KBM-7 (cell line): ENCODE measurements at regions of chr7 and their contacts with region 1.

Region 1: GRCh38 chr7:88111136-88111743 is 108.6 kb downstream of the SRI start:
- DNase-seq: peak; percentile 63

Region 2: DNA sequence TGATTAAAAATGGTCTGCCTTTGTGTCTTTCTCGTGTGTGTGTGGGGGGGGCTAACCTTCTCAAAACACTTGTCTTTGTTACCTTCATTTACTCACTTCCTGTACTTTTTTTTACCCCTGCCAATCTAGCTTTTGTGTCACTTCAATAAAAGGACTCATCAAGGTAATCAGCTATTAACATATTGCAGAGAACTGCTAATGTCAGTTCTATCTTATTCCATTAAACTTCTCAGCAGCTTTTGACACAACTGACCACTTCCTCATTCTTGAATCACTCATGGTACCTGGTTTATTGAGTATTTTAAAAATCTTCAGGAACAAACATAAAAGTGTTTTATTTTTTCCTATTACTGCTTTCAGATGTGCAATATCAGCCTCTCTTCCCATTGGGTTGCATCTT is 294.9 kb before region 1 on chr7:
- in situ Hi-C with region 1: loop called (anchors 25 kb)
- DNase-seq: peak; percentile 27

Region 3: GRCh38 chr7:88226886-88227516 is 115.8 kb after region 1 on chr7:
- in situ Hi-C with region 1: no loop called
- DNase-seq: no peak